Left ventricle myocardium inferior (tissue), 1 donor: ENCODE measurements at regions of chr13 and their contacts with region 1.

Region 1: DNA sequence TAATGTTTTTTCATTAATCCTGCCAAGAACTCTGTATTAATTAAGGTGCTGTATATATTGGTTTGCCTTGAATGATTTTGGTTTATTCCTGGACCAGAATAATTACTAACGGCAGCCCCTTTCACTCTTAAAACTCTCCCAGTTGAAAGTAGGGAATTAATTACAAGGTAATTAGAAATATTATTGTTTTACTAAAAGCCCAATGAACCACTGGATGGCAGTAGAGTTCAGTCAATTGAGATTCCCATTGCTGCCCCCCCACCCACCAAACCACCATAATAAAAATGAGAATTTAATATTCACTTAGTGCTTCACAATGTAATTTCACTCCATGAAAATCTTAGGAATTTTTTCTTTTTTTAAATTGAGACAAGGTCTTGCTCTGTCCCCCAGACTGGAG is 13.7 kb downstream of the WBP4 start:
- DNase-seq: no peak
- H3K4me3 ChIP-seq: no peak overlapping the region
- H3K27ac ChIP-seq: no peak overlapping the region
- H3K4me1 ChIP-seq: no peaks in the 10 kb centered on the region
- H3K27me3 ChIP-seq: no peaks in the 10 kb centered on the region
- CTCF ChIP-seq: peak; percentile 64

Region 2: GRCh38 chr13:40644838-40645604 is 430.0 kb before region 1 on chr13:
- intact Hi-C with region 1: no loop called
- DNase-seq: no peak
- H3K4me3 ChIP-seq: peak overlapping the region; percentile 3
- H3K27ac ChIP-seq: peak overlapping the region; percentile 1
- H3K4me1 ChIP-seq: peaks cover 85% of the 10 kb centered on the region
- H3K27me3 ChIP-seq: no peaks in the 10 kb centered on the region
- CTCF ChIP-seq: no peak

Region 3: DNA sequence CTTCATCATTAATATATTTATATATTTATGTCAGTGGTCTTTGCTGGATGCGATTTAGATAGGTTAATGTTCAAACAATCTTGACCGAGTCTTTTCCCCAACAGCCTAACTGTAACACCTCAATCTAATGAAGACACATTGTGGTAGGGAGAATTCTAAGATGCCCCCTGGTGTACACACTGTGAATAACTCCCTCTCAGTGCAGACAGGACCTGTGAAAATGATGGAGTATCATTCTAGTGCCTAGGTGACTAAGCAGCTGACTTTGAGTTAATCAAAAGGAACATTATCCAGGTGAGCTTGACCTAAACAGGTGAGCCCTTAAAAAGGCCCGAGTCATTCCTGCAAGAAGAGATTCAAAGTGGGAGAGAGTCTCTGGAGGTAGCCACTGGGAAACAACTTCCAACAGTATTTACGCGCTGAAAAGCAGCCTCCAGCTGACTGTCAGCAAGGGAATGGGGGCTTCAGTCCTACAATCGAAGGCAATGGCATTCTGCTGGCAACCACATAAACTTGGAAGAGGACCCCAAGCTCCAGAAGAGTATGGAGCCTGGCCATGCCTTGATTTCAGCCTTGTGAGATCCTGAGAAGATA is 147.3 kb after region 1 on chr13:
- intact Hi-C with region 1: loop called (anchors 5 kb)
- DNase-seq: no peak
- H3K4me3 ChIP-seq: no peak overlapping the region
- H3K27ac ChIP-seq: no peak overlapping the region
- H3K4me1 ChIP-seq: no peaks in the 10 kb centered on the region
- H3K27me3 ChIP-seq: no peaks in the 10 kb centered on the region
- CTCF ChIP-seq: peak; percentile 87